Natural killer cell (primary cell): ENCODE measurements at regions of chr2 and their contacts with region 1.

Region 1: DNA sequence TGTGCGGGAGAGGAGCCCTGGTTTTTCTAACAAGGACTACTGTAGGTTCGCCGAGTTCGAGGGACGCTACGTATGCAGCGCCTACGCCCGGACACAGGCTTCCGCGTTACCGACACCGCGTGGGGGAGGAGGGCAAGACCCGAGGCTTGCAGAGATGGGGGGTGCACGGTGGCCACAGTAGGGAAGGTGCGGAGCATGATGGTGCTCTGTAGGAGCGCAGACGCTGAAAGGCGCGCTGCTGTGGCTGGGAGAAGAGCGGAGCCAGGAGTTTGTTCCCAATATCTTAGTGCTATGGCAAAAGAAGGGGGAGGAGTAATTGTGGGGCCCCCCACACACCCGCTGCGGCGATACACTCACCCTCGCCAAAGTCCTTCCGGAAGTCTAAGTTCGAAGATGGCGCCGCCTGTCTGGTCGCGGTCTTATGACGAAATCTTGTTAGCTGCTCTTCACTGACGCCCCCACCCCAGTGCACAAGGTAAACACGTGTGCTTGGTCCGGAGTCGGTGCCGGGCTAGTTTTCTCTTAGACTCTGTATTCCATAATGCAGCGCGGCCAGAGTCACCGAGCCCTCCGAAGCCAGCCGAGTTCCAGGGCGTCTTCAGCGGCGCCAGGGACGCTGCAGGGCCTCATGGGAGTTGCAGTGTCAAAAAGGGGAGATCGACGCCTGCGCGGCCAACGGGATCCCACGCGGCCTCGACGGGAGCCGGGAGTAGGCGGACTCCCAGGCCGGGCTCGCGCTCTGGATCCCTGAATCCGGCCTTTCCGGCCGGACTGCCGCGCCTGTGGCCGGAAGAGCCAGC is at the start of gene GTF3C2:
- DNase-seq: peak; percentile 89 to 97
- ATAC-seq: peak; percentile 82 to 92 (median 83)
- H3K4me3 ChIP-seq: peak within 1 kb of the TSS; percentile 72
- H3K4me3 Mint-ChIP-seq: peak within 1 kb of the TSS; percentile 99
- H3K27ac ChIP-seq: peak within 1 kb of the TSS; percentile 96
- H3K27ac Mint-ChIP-seq: peak within 1 kb of the TSS; percentile 98 to 100
- H3K4me1 ChIP-seq: peaks cover 25% of the 10 kb centered on the region
- H3K4me1 Mint-ChIP-seq: peaks cover 41 to 45% of the 10 kb centered on the region in 2 donors
- H3K27me3 ChIP-seq: no peaks in the 10 kb centered on the region
- H3K27me3 Mint-ChIP-seq: no peaks in the 10 kb centered on the region
- CTCF ChIP-seq: no peak
- total RNA-seq, gene GTF3C2: 56.1 to 68.7 (median 59.7) TPM

Region 2: GRCh38 chr2:26495705-26496297 is 860.8 kb before region 1 on chr2:
- intact Hi-C with region 1: no loop called
- DNase-seq: no peak
- ATAC-seq: no peak
- H3K4me3 ChIP-seq: no peak overlapping the region
- H3K4me3 Mint-ChIP-seq: no peak overlapping the region
- H3K27ac ChIP-seq: no peak overlapping the region
- H3K27ac Mint-ChIP-seq: no peak overlapping the region
- H3K4me1 ChIP-seq: no peaks in the 10 kb centered on the region
- H3K4me1 Mint-ChIP-seq: no peaks in the 10 kb centered on the region
- H3K27me3 ChIP-seq: no peaks in the 10 kb centered on the region
- H3K27me3 Mint-ChIP-seq: peaks cover 5 to 16% of the 10 kb centered on the region in 2 donors
- CTCF ChIP-seq: no peak

Region 3: DNA sequence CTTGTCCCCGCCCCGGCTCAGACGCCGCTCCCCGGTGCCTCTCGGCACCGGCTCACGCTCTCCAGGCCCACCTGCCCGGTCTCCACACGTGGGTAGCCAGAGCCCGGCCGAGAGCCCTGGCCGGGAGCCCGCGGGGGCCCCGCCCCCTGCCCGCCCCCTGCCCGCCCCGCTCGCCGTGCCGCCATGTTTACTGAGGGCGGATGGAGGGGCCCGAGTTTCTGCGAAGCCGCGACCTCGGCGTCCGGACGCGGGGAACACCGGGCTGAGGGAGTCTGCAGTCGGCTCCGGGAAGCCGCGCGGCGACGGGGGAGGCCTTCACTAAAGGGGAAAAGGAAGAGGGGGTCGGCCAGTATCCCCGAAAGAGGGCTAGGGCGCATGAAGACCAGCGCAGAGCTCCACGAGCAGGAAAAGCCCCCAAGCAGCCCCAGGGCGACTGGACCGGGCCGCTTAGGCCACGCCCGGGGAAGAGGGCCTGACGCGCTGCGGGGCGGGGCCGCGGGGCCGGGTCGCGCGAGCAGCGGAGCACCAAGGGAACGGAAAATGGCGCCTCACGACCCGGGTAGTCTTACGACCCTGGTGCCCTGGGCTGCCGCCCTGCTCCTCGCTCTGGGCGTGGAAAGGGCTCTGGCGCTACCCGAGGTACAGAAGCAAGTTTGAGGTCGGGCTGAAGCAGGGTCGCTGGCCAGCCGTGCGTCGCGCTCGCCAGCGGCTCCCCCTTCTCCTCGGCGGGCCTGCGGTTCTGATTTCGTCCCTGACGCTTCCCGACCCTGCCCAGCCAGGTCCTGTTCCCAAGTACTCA is 144.6 kb before region 1 on chr2 and contains the starts of genes ATRAID and SLC5A6:
- intact Hi-C with region 1: loop called (anchors 5 kb)
- DNase-seq: peak; percentile 92 to 94
- ATAC-seq: peak; percentile 89 to 96 (median 89)
- H3K4me3 ChIP-seq: peak within 1 kb of the TSS; percentile 81
- H3K4me3 Mint-ChIP-seq: peak within 1 kb of the TSS; percentile 100
- H3K27ac ChIP-seq: peak within 1 kb of the TSS; percentile 97
- H3K27ac Mint-ChIP-seq: peak within 1 kb of the TSS; percentile 99 to 100
- H3K4me1 ChIP-seq: peaks cover 19% of the 10 kb centered on the region
- H3K4me1 Mint-ChIP-seq: peaks cover 26 to 42% of the 10 kb centered on the region in 2 donors
- H3K27me3 ChIP-seq: no peaks in the 10 kb centered on the region
- H3K27me3 Mint-ChIP-seq: no peaks in the 10 kb centered on the region
- CTCF ChIP-seq: no peak
- total RNA-seq, gene ATRAID: 65.5 to 76.6 (median 76.5) TPM
- total RNA-seq, gene SLC5A6: 86.2 to 102 (median 93.7) TPM

Region 4: GRCh38 chr2:27322766-27323595 is 33.6 kb before region 1 on chr2 and contains the start of gene MPV17:
- intact Hi-C with region 1: loop called (anchors 1 kb)
- DNase-seq: peak; percentile 79 to 93
- ATAC-seq: peak; percentile 96 to 98 (median 96)
- H3K4me3 ChIP-seq: peak within 1 kb of the TSS; percentile 79
- H3K4me3 Mint-ChIP-seq: peak within 1 kb of the TSS; percentile 99
- H3K27ac ChIP-seq: peak within 1 kb of the TSS; percentile 88
- H3K27ac Mint-ChIP-seq: peak within 1 kb of the TSS; percentile 98 to 99
- H3K4me1 ChIP-seq: peaks cover 18% of the 10 kb centered on the region
- H3K4me1 Mint-ChIP-seq: peaks cover 18 to 23% of the 10 kb centered on the region in 2 donors
- H3K27me3 ChIP-seq: no peaks in the 10 kb centered on the region
- H3K27me3 Mint-ChIP-seq: no peaks in the 10 kb centered on the region
- CTCF ChIP-seq: no peak
- total RNA-seq, gene MPV17: 63.9 to 75.2 (median 64.8) TPM

Region 5: DNA sequence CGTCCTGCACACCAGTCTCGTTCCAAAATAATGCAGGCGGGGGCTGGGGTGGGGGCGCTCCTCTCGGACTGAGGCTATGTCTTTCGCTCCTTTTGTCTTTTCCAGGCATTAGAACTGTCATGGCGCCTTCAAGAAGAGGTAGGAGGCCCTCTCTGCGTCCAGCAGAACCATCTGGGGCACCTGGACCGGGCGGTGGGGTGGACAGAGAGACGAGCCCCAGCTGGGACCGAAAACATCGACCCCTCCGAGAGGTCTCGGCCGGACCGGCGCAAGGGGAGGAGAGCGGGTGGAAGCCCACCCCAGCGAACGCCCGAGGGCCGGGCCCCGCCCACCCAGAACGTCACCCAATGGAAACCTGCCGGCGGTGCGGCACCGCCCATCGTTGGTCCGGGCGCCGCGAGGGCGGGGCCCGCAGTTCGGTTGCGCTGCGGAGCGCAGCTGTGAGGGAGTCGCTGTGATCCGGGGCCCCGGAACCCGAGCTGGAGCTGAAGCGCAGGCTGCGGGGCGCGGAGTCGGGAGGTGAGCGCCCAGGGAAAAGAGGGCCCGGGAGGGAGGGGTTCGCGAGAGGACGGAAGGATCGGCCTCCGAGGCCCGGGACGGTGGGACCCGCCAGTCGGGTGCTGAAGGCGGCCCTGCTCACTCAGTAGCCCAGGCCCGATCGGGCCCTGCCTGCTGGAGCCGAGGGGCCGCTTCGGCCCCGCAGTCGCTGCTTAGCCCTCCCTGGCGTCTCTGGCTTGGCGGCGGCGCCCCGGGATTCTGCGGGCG is 71.8 kb after region 1 on chr2 and contains the start of gene NRBP1:
- intact Hi-C with region 1: loop called (anchors 1 kb)
- DNase-seq: peak; percentile 94 to 95
- ATAC-seq: peak; percentile 84 to 97 (median 90)
- H3K4me3 ChIP-seq: peak within 1 kb of the TSS; percentile 69
- H3K4me3 Mint-ChIP-seq: peak within 1 kb of the TSS; percentile 95
- H3K27ac ChIP-seq: peak within 1 kb of the TSS; percentile 78
- H3K27ac Mint-ChIP-seq: peak within 1 kb of the TSS; percentile 94 to 97
- H3K4me1 ChIP-seq: peaks cover 28% of the 10 kb centered on the region
- H3K4me1 Mint-ChIP-seq: peaks cover 42 to 45% of the 10 kb centered on the region in 2 donors
- H3K27me3 ChIP-seq: no peaks in the 10 kb centered on the region
- H3K27me3 Mint-ChIP-seq: no peaks in the 10 kb centered on the region
- CTCF ChIP-seq: no peak
- total RNA-seq, gene NRBP1: 240 to 278 (median 262) TPM

Region 6: GRCh38 chr2:27489498-27490397 is 133.2 kb after region 1 on chr2 and contains the start of gene IFT172:
- intact Hi-C with region 1: loop called (anchors 2 kb)
- DNase-seq: peak; percentile 97 to 100
- ATAC-seq: peak; percentile 95 to 99 (median 96)
- H3K4me3 ChIP-seq: peak within 1 kb of the TSS; percentile 45
- H3K4me3 Mint-ChIP-seq: peak within 1 kb of the TSS; percentile 90
- H3K27ac ChIP-seq: peak within 1 kb of the TSS; percentile 77
- H3K27ac Mint-ChIP-seq: peak within 1 kb of the TSS; percentile 92
- H3K4me1 ChIP-seq: peaks cover 21% of the 10 kb centered on the region
- H3K4me1 Mint-ChIP-seq: peaks cover 14 to 20% of the 10 kb centered on the region in 2 donors
- H3K27me3 ChIP-seq: peaks cover 13% of the 10 kb centered on the region
- H3K27me3 Mint-ChIP-seq: peaks cover 12 to 21% of the 10 kb centered on the region in 2 donors
- CTCF ChIP-seq: no peak
- total RNA-seq, gene IFT172: 24.8 to 35.7 (median 30.7) TPM

Region 7: DNA sequence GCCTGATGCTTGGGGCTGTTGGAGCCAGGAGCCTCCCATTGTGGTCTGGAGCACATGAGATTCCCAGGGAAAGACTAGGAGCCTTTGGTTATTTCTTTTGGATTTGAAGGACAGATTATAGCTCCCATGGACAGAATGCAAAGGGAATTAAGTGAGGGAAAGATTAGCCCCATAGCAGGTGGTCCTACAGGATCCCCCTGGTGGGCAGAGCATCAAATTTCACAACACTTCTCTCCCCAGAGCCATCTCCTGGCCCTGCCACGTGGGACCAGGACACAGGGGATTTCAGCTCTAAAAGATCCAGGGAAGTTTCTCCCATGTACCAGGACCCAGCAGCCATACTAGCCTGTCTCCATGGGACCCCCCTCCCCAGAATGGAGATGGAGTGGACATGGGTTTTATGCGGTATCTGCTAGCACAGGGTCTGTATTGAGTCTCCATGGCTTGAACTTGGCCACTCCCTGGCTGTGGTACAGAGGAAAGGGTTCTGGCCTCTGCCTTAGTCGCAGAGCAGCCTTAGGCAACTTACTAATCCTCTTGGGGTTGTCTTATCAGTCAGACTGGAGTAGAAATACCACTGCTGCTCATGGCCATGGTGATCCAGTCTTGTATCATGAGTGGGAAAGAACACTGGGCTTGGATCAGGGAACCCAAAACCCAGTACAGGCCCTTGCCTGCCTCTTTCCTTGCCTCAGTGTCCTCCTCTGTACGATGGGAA is 1132.4 kb after region 1 on chr2:
- intact Hi-C with region 1: no loop called
- DNase-seq: no peak
- ATAC-seq: no peak
- H3K4me3 ChIP-seq: no peak overlapping the region
- H3K4me3 Mint-ChIP-seq: no peak overlapping the region
- H3K27ac ChIP-seq: no peak overlapping the region
- H3K27ac Mint-ChIP-seq: no peak overlapping the region
- H3K4me1 ChIP-seq: no peaks in the 10 kb centered on the region
- H3K4me1 Mint-ChIP-seq: no peaks in the 10 kb centered on the region
- H3K27me3 ChIP-seq: no peaks in the 10 kb centered on the region
- H3K27me3 Mint-ChIP-seq: no peaks in the 10 kb centered on the region
- CTCF ChIP-seq: no peak